Stomach (tissue), 19 donors: ENCODE measurements at regions of chr9 and their contacts with region 1.

Region 1: DNA sequence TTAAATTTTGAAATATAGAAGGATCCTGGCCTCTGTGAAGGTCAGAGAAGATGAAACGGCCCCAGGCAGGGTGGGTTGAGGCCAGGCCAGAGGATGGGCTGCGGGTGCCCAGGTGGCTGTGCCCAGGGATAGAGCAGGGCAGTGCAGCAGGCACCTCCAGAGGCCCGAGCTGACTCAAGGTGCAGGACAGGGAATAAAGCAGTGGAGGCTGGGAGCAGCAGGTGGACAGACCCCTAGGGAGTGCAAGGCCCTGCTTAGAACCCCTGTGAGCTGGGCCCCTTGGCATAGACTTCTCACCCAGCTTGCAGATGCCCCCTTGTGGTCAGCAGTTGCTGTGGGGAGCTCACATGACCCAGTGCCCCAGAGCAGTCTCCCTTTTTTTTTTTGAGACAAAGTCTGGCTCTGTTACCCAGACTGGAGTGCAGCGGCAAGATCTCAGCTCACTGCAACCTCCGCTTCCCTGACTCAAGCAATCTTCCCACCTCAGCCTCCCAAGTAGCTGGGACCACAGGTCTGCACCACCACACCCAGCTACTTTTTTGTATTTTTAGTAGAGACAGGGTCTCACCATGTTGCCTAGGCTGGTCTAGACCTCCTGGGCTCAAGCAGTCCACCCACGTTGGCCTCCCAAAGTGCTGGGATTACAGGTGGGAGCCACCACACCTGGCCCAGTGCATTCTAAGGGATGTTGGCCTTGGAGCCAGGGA is 118.8 kb downstream of the WNK2 start:
- DNase-seq: peak; percentile 75 to 83
- H3K4me3 ChIP-seq: no peak overlapping the region
- H3K27ac ChIP-seq: no peak overlapping the region
- H3K4me1 ChIP-seq: peaks cover 0 to 26% (median 11%) of the 10 kb centered on the region in 4 donors
- H3K27me3 ChIP-seq: no peaks in the 10 kb centered on the region
- CTCF ChIP-seq: peak in 5 of 7 experiments; percentile 23 to 78 (median 50)
- EP300 ChIP-seq: no peak
- POLR2A ChIP-seq: no peak

Region 2: GRCh38 chr9:93028448-93029006 is 274.2 kb before region 1 on chr9:
- intact Hi-C with region 1: loop called (anchors 10 kb)
- DNase-seq: peak in 1 of 2 donors; percentile 69
- H3K4me3 ChIP-seq: no peak overlapping the region
- H3K27ac ChIP-seq: no peak overlapping the region
- H3K4me1 ChIP-seq: peaks cover 0 to 22% (median 0%) of the 10 kb centered on the region in 4 donors
- H3K27me3 ChIP-seq: no peaks in the 10 kb centered on the region
- CTCF ChIP-seq: no peak
- EP300 ChIP-seq: no peak
- POLR2A ChIP-seq: no peak

Region 3: GRCh38 chr9:93159601-93160471 is 142.9 kb before region 1 on chr9:
- intact Hi-C with region 1: loop called (anchors 5 kb)
- DNase-seq: peak; percentile 90 to 94
- H3K4me3 ChIP-seq: no peak overlapping the region
- H3K27ac ChIP-seq: no peak overlapping the region
- H3K4me1 ChIP-seq: peaks cover 0 to 25% (median 5%) of the 10 kb centered on the region in 4 donors
- H3K27me3 ChIP-seq: no peaks in the 10 kb centered on the region
- CTCF ChIP-seq: peak in 5 of 7 experiments; percentile 96 to 98 (median 98)
- EP300 ChIP-seq: no peak
- POLR2A ChIP-seq: no peak

Region 4: DNA sequence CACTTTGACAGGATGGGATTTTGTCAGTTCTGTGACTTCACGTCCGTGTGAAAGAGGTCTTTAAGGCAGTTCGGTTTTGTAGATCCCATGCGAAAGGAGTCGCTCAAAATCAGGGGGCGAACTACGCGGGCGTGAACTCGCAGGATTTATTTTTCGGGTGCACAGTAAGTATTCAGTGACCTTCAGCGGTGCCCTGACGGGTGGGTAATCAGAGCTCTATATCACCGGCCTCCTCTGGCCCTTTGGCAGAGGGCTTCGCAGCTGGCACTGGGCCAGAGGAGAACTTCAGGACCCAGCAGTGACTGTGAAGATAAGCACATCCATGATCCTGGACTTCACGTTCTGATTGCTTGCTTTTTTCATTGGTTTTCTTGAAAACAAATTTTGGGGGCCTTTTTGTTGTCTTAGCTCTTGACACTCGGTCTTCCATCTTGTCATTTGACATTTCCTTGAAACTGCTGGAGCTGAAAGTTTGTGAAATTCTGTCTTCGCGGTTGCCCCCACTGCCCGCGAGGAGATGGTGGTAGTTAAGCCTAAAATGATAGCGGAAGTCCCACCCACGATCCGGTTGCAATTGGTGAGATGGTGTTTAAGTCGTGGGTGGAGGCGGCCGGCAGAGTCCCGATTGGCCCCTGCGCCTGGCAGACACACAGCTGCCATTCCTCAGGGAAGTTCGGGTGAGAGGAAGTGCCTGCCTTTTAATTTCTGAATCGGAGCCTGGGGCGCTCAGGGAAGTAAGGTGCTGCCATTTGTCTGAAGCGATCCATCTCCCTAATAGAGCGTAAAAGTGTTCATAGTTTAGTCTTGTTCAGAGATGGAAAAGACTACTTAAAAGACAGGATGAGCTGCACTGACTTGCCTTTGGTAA is 150.6 kb after region 1 on chr9 and contains the start of gene FAM120AOS:
- intact Hi-C with region 1: no loop called
- DNase-seq: peak; percentile 94 to 98
- H3K4me3 ChIP-seq: peak within 1 kb of the TSS; percentile 79 to 92 (median 88)
- H3K27ac ChIP-seq: peak within 1 kb of the TSS; percentile 95 to 99 (median 97)
- H3K4me1 ChIP-seq: peaks cover 42 to 67% (median 57%) of the 10 kb centered on the region in 4 donors
- H3K27me3 ChIP-seq: no peaks in the 10 kb centered on the region
- CTCF ChIP-seq: no peak
- EP300 ChIP-seq: no peak
- POLR2A ChIP-seq: peak in 1 of 4 donors; percentile 59
- total RNA-seq, gene FAM120AOS: 12.9 to 232 (median 40.3) TPM